AG04450 (cell line): ENCODE measurements at regions of chr2 and their contacts with region 1.

Region 1: GRCh38 chr2:144099746-144100438 is 420.0 kb downstream of the ZEB2 start:
- DNase-seq: peak; percentile 91
- H3K4me3 ChIP-seq: no peak overlapping the region; the same call in 1 of the 2 replicates
- H3K27ac ChIP-seq: peak overlapping the region; percentile 62
- H3K27me3 ChIP-seq: no peaks in the 10 kb centered on the region
- CTCF ChIP-seq: peak; percentile 71

Region 2: DNA sequence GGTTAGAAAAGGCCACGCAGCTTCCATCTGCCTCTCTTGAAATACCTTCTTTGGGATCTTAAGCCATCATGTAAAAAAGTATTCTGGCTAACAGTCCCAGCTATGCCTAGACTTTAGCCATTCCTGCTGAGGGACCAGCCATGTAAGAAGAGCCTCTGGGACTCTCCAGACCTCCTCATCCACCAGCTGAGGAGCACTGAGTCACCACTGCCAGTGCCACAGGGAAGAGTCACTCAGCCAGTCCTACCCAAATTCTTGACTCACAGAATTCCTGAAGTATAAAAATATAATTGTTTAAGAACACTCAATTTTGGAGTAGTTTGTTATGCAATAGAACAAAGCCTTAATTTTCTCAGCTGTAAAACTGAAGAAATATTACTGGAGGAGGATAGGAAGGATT is 16.7 kb before region 1 on chr2:
- CTCF ChIA-PET with region 1: interaction called, 15 read pairs
- POLR2A ChIA-PET with region 1: interaction called, 4 read pairs
- DNase-seq: no peak
- H3K4me3 ChIP-seq: no peak overlapping the region
- H3K27ac ChIP-seq: peak overlapping the region; percentile 72
- H3K27me3 ChIP-seq: no peaks in the 10 kb centered on the region
- CTCF ChIP-seq: no peak

Region 3: DNA sequence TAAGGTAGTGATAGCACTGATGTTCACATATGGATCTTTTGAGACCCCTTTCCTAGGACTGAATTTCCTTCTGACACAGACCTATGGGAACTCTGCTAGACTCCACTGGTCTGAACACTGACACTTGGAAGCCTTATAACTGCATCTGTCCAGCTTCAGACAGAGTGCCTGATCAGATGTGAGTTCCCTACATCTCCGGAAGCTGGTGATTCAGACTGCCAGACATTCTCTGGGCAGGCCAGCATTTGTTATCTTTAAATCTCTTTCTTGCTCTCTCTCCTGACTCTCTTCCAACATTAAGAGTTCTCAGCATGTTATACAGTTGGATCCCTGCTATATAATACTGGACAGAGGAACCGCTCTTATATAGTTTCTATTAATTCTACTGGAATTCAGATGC is 11.5 kb after region 1 on chr2:
- CTCF ChIA-PET with region 1: interaction called, 10 read pairs
- POLR2A ChIA-PET with region 1: no interaction called
- DNase-seq: no peak
- H3K4me3 ChIP-seq: no peak overlapping the region
- H3K27ac ChIP-seq: no peak overlapping the region
- H3K27me3 ChIP-seq: no peaks in the 10 kb centered on the region
- CTCF ChIP-seq: no peak

Region 4: DNA sequence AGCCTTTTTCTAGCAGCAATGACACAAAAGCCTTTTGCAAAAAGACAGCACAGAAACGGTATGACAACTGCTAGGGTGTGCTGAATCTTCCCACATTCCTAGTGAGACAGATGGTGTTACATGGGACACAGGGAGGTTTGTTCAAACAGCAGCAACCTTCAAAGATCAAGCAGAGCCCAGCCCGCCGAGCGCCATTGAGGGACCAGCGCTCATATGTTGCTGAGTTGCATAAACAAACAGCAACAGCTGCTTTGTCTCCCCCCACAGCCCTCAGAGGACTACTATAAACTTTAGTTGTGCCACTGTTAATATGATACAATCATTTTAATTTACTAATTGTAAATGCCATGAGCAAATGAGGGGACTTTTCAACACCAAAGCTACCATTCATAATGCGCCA is 302.4 kb after region 1 on chr2:
- CTCF ChIA-PET with region 1: no interaction called
- POLR2A ChIA-PET with region 1: no interaction called
- DNase-seq: no peak
- H3K4me3 ChIP-seq: no peak overlapping the region
- H3K27ac ChIP-seq: no peak overlapping the region
- H3K27me3 ChIP-seq: no peaks in the 10 kb centered on the region
- CTCF ChIP-seq: no peak